Psoas muscle (tissue), 8 donors: ENCODE measurements at regions of chr10 and their contacts with region 1.

Region 1: DNA sequence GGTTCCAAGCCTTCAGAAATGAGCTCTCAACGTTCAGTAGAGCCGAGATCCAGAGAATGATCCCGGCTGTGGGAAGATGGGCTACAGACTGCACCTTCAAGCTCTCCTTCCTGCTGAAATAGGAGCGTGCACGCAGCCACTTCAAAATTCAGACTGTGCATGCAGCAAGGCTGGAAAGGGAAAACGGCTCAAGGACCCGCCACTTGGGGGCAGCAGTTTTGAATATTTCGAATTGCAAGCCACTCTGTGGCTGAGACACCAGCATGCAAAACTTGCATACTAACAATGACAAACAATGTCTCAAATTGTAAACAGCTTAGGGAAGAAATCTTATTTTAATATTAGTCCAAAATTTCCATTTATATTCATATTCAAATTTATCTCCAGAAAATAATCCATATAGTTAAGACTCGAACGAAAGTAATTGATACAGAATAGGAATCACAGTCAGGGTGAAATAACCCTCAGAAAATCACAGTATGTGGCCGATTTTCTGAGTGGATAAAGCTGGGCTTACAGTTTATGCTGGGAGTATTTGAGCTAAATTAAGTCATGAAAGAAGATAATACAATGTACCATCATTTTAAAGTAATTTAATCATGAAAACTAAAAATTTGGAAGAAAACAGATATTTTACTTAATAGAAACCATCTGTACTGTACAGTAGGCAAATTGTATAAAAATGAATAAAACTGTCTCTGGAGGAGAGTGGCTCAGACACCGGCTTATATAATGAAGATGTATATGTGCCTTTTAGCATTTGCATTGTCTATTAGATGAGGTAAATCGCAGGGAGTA is 137.9 kb upstream of the MKI67 start:
- DNase-seq: peak; percentile 46 to 69
- ATAC-seq: peak in 1 of 4 donors; percentile 69
- H3K4me3 ChIP-seq: no peak overlapping the region
- H3K27ac ChIP-seq: no peak overlapping the region
- H3K4me1 ChIP-seq: no peaks in the 10 kb centered on the region
- H3K27me3 ChIP-seq: peaks cover 0 to 16% (median 2%) of the 10 kb centered on the region in 3 donors
- CTCF ChIP-seq: peak; percentile 61

Region 2: DNA sequence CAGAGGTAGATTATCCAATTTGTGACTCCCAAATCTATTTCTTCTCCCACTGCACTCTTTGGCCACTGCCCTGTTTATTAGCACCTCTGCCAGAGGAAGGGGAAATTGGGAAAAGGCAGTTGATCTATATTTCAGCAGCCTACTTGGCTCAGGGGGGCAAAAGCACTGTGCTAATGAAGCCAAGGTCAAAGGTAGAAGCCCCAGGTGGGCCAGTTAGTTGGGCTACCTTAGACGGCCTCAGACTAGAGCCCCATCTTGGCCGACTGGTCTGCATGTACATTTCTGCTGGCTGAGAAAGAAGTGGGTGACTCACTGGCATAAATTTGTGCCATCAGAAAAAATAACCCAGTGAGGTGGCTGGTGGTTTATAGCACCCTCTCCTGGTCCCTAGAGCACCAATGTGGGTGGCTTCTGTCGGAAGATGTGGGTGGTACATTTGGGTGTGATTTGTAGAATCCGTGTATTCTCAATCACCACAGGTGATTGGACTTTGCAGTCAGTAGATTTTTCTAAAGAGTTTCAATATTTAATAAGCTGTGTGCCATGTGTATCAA is 155.5 kb after region 1 on chr10:
- intact Hi-C with region 1: loop called (anchors 5 kb)
- DNase-seq: no peak
- ATAC-seq: peak; percentile 64 to 99 (median 94)
- H3K4me3 ChIP-seq: no peak overlapping the region
- H3K27ac ChIP-seq: no peak overlapping the region
- H3K4me1 ChIP-seq: no peaks in the 10 kb centered on the region
- H3K27me3 ChIP-seq: peaks cover 0 to 2% (median 0%) of the 10 kb centered on the region in 3 donors
- CTCF ChIP-seq: peak; percentile 55

Region 3: DNA sequence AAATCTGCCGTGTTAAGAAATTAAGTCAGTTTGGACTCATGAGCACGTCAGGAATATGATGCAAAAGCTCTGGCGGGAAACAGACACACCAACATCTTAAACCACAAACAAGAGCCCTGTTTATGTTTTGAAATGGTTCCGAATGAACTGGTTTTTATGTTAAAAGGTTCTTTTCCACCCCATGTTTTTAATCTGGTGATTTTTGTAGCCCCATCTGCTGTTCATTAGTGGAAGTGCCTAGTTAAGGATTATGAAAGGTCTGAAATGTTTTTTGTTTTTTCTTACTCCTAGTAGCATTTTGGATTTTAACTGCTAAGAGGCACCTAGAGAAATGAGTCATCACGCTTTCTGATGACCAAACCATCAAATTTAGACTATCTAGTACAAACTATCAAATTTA is 266.2 kb after region 1 on chr10:
- intact Hi-C with region 1: loop called in 1 of 2 experiments (anchors 5 kb)
- DNase-seq: no peak
- ATAC-seq: no peak
- H3K4me3 ChIP-seq: no peak overlapping the region
- H3K27ac ChIP-seq: no peak overlapping the region
- H3K4me1 ChIP-seq: peaks cover 7% of the 10 kb centered on the region
- H3K27me3 ChIP-seq: peaks cover 0 to 2% (median 0%) of the 10 kb centered on the region in 3 donors
- CTCF ChIP-seq: peak; percentile 49